Heart right ventricle (tissue), 16 donors: ENCODE measurements at regions of chr5 and their contacts with region 1.

Region 1: GRCh38 chr5:80069918-80070318 is 34.8 kb downstream of the THBS4 start:
- DNase-seq: peak in 1 of 2 donors; percentile 34
- ATAC-seq: peak; percentile 18 to 79 (median 74)
- H3K4me3 ChIP-seq: peak overlapping the region in 1 of 10 donors; percentile 10
- H3K27ac ChIP-seq: peak overlapping the region; percentile 30 to 81 (median 53)
- H3K4me1 ChIP-seq: peaks cover 5 to 26% (median 17%) of the 10 kb centered on the region in 9 donors
- H3K27me3 ChIP-seq: no peaks in the 10 kb centered on the region
- CTCF ChIP-seq: no peak

Region 2: DNA sequence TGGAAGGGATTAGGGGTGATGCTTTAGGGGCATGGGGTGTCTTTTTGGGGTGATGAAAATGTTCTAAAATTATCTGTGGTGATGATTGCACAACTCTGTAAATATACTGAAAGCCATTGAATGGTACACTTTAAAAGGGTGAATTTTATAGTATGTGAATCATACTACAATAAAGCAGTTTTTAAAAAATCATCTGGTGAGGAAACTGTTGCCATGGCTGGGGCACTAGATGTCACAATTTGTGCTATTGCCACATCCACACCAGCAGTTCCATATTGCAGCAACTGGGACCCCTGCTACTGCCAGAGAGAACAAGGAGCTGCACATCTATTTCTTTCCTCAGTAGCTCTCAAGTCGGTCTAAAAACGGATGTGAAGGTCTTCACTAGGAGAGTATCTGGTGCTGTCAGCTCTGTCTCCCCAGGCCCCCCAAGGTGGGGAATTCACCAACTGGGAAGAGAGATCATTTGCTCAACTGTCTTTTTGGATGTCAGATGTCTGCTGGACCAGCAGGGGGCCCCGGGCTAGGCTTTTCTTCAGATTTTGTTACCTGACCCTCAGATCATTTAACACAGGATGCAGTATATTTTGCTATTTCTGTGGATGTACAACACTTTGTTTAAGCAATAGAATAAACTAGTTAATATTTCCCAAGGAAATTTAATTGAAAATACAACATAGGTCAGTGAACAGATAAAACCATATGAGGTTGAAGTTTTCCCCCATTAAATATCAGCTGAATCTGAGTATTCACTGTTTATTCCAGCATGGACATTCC is 367.1 kb before region 1 on chr5:
- intact Hi-C with region 1: loop called in 1 of 10 experiments (anchors 10 kb)
- DNase-seq: no peak
- ATAC-seq: no peak
- H3K4me3 ChIP-seq: no peak overlapping the region
- H3K27ac ChIP-seq: peak overlapping the region in 8 of 10 donors; percentile 10 to 99 (median 66)
- H3K4me1 ChIP-seq: peaks cover 0 to 71% (median 37%) of the 10 kb centered on the region in 9 donors
- H3K27me3 ChIP-seq: no peaks in the 10 kb centered on the region
- CTCF ChIP-seq: peak; percentile 20 to 66 (median 56)

Region 3: GRCh38 chr5:79924936-79925893 is 144.7 kb before region 1 on chr5:
- intact Hi-C with region 1: no loop called
- DNase-seq: no peak
- ATAC-seq: no peak
- H3K4me3 ChIP-seq: no peak overlapping the region
- H3K27ac ChIP-seq: no peak overlapping the region
- H3K4me1 ChIP-seq: no peaks in the 10 kb centered on the region
- H3K27me3 ChIP-seq: no peaks in the 10 kb centered on the region
- CTCF ChIP-seq: peak in 1 of 9 donors; percentile 18

Region 4: GRCh38 chr5:80191991-80192398 is 122.1 kb after region 1 on chr5:
- intact Hi-C with region 1: no loop called
- DNase-seq: peak; percentile 58 to 65
- ATAC-seq: peak; percentile 46 to 71 (median 66)
- H3K4me3 ChIP-seq: peak overlapping the region in 3 of 10 donors; percentile 6 to 16 (median 16)
- H3K27ac ChIP-seq: peak overlapping the region; percentile 57 to 87 (median 78)
- H3K4me1 ChIP-seq: peaks cover 29 to 75% (median 62%) of the 10 kb centered on the region in 9 donors
- H3K27me3 ChIP-seq: no peaks in the 10 kb centered on the region
- CTCF ChIP-seq: no peak